ENCODE measurements at regions of chr1 and their contacts with region 1.

Region 1: GRCh38 chr1:212782422-212783154 is 9.0 kb downstream of the NSL1 start:
- DNase-seq: no peak
- H3K4me3 ChIP-seq: no peak overlapping the region
- H3K27ac ChIP-seq: no peak overlapping the region
- H3K4me1 ChIP-seq: no peaks in the 10 kb centered on the region
- H3K27me3 ChIP-seq: no peaks in the 10 kb centered on the region
- CTCF ChIP-seq: peak; percentile 46 to 76 (median 52)
- POLR2A ChIP-seq: no peak

Region 2: DNA sequence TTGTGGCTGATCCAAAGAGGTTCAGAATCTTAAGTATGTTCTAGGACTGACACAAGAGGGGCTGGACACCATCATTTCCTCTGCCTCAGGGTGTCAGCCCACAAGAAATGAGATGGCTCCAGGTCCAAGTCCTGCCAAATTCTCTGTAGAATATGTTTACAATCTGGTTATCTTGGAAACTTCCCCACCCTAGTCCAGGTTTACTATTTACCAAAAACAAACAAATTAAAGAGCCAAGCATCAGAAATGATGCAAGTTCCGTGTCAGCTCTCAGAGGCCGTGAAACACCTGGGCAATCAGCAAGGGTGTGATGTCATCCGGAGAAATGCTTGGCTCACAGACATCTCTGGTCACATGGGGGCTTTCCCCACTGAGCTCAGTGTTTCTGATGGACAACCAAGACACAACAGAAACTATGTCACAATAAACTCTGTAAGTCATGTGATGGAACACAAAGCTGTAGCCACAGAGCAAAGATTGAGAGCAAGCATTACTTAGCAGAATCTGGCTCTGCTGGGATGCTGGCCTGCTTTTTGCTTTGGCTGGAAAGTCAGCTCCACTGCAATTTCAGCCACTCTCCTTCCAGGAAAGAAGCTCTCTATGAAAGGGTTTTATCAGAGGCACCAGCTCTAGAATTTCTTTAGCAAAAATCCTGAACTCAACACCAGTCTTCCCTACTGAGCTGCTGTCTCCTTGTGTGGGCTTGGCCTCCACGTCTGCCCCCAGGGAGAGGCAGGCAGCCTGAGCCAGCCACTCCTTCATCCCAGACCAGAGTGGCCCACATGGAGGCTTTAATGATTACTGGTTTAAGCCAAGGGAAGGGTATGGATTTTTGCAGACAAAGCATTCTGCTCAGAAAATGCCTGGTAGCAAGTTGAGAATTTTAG is 293.9 kb before region 1 on chr1:
- intact Hi-C with region 1: loop called (anchors 10 kb)
- DNase-seq: no peak
- H3K4me3 ChIP-seq: no peak overlapping the region
- H3K27ac ChIP-seq: peak overlapping the region in 3 of 4 donors; percentile 31 to 70 (median 52)
- H3K4me1 ChIP-seq: peaks cover 3 to 18% (median 8%) of the 10 kb centered on the region in 3 donors
- H3K27me3 ChIP-seq: no peaks in the 10 kb centered on the region
- CTCF ChIP-seq: no peak
- POLR2A ChIP-seq: no peak